ENCODE measurements at regions of chr2 and their contacts with region 1.

Region 1: DNA sequence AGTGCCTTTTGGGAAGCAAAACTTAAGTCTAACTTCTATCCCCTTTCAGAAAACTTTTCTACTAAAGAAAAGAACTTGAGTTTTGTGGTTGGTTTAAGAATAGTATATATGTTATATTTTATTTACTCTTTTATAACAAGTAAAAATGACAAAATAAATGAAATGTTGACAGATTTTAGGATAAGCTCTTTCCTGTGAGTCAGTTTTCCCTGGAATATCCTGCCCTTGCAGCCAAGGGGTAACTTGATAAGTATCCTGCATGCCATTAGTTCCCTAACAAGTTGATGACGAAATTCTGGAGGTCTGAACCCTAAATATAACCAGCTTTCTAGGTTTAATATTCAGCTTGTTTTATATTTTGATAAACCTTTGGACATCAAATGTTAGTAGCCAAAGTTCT is 7.3 kb upstream of the HTR2B start:
- DNase-seq: no peak
- ATAC-seq: peak; percentile 52
- H3K4me3 ChIP-seq: no peak overlapping the region
- H3K27ac ChIP-seq: no peak overlapping the region
- H3K4me1 ChIP-seq: peaks cover 0 to 8% of the 10 kb centered on the region in 2 donors
- H3K27me3 ChIP-seq: no peaks in the 10 kb centered on the region

Region 2: DNA sequence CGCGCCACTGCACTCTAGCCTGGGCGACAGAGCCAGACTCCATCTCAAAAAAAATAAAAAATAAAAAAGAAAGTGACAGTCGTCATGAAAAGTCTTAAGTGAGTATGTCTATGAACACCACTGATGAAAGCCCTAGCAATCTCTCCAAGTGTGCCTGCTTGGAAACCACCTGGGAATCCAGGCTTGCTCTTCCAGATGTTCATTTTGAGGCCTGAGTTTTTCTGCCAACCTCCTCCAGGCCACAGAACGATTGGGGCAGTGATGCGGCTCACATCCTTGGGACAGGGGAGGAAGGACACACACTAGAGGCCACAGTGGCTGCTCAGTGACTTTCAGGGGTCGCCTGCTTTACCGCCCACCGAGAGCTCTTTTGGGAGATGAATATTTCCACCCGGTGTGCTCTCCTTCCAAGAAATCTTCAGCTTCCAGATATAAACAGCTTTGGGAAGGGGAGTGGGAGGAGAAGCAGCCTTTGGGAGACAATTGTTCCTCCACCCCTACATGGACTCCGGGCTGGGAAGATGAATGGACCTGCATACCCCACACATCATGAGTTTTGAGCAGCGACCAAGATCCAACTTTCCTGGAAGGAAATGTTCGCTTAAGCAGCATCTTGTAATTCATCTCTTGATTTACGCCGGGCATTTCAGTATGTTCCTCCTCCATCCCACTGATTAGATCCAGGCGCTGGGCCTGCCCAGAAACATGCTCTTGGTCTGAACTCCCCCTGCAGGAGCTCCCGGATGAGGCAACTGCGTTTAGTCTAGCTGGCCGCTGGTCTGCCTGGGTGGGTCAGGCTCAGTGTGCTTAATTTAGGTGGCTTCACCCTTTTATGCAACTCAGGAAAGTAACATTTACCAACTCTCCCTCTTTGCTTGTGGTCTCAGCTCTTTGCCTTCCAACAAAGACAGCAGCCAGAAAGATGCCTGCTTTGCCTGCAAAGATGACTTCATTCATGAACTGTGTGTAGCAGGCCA is 60.1 kb after region 1 on chr2:
- intact Hi-C with region 1: loop called in 1 of 2 experiments (anchors 2 kb)
- DNase-seq: peak; percentile 93 to 94
- ATAC-seq: peak; percentile 78
- H3K4me3 ChIP-seq: no peak overlapping the region
- H3K27ac ChIP-seq: peak overlapping the region; percentile 69 to 99
- H3K4me1 ChIP-seq: no peaks in the 10 kb centered on the region
- H3K27me3 ChIP-seq: no peaks in the 10 kb centered on the region

Measured in aorta (tissue), 5 donors.